ENCODE measurements at regions of chr4 and their contacts with region 1.

Region 1: DNA sequence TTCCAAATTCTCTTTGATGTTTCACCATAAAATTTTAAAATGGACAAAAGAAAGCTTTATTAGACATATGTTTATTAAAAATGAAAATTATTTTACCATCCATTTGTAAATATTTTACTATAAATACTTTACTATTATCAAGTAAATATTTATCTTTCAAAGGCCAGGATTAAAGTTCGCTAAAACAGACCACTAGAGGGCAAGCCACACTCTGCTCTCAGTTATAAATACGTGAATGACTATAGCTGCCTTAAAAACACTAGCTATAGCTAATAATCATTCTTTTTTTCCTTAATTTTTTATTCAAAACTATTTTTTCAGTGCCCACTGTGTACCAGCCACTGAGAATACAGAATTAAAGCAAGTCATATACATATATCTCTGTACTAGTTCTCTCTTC is 38.6 kb downstream of the UNC5C start:
- DNase-seq: peak; percentile 22 to 67 (median 52)
- H3K4me3 ChIP-seq: no peak overlapping the region
- H3K27ac ChIP-seq: no peak overlapping the region
- H3K4me1 ChIP-seq: no peaks in the 10 kb centered on the region
- H3K27me3 ChIP-seq: no peaks in the 10 kb centered on the region

Region 2: GRCh38 chr4:95289028-95289634 is 221.0 kb before region 1 on chr4:
- CTCF ChIA-PET with region 1: no interaction called
- POLR2A ChIA-PET with region 1: no interaction called
- DNase-seq: peak in 2 of 3 donors; percentile 34 to 67
- H3K4me3 ChIP-seq: no peak overlapping the region
- H3K27ac ChIP-seq: peak overlapping the region in 1 of 2 experiments; percentile 18
- H3K4me1 ChIP-seq: peaks cover 6 to 36% (median 27%) of the 10 kb centered on the region in 4 experiments
- H3K27me3 ChIP-seq: no peaks in the 10 kb centered on the region

Region 3: GRCh38 chr4:95522682-95523530 is 12.8 kb after region 1 on chr4:
- CTCF ChIA-PET with region 1: interaction called, 14 read pairs
- POLR2A ChIA-PET with region 1: no interaction called
- DNase-seq: no peak
- H3K4me3 ChIP-seq: no peak overlapping the region
- H3K27ac ChIP-seq: no peak overlapping the region
- H3K4me1 ChIP-seq: no peaks in the 10 kb centered on the region
- H3K27me3 ChIP-seq: no peaks in the 10 kb centered on the region

Region 4: GRCh38 chr4:95528388-95528948 is 18.3 kb after region 1 on chr4:
- CTCF ChIA-PET with region 1: interaction called, 14 read pairs
- POLR2A ChIA-PET with region 1: no interaction called
- DNase-seq: no peak
- H3K4me3 ChIP-seq: no peak overlapping the region
- H3K27ac ChIP-seq: no peak overlapping the region
- H3K4me1 ChIP-seq: peaks cover 0 to 3% (median 0%) of the 10 kb centered on the region in 4 experiments
- H3K27me3 ChIP-seq: no peaks in the 10 kb centered on the region

Region 5: GRCh38 chr4:95549246-95550114 is 39.3 kb after region 1 on chr4:
- CTCF ChIA-PET with region 1: interaction called, 18 read pairs
- POLR2A ChIA-PET with region 1: no interaction called
- DNase-seq: peak; percentile 48 to 86 (median 83)
- H3K4me3 ChIP-seq: peak overlapping the region; percentile 58 to 92 (median 73)
- H3K27ac ChIP-seq: no peak overlapping the region
- H3K4me1 ChIP-seq: peaks cover 4 to 32% (median 23%) of the 10 kb centered on the region in 4 experiments
- H3K27me3 ChIP-seq: peaks cover 0 to 50% (median 25%) of the 10 kb centered on the region in 5 experiments